Mammary epithelial cell (primary cell): ENCODE measurements at regions of chr7 and their contacts with region 1.

Region 1: DNA sequence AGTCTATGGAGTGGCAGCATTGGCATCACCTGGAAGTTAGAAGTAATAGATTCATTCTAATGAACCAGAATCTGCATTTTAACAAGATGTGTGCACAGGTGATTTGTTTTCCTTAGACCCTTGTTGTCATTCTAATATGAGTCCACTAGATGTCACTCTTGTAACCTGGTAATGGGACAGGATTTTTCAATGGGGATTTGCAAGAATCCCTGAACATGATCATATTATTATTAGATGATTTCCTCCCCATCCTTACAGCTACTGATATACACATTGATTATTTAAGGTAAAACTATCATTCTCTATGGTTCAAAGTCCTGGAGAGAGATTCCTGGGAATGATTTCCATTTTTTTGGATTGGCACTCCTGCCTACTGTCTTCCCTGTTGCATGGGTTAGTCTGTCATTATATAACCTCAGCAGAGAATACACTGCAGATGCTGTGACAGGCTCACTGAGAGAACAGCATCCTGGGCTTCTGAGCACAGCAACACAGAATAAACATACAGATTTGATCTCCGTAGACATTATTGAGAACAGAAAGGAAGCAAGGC is 194.9 kb downstream of the SUGCT start:
- DNase-seq: peak; percentile 49
- H3K4me3 ChIP-seq: no peak overlapping the region
- H3K27ac ChIP-seq: no peak overlapping the region
- H3K4me1 ChIP-seq: no peaks in the 10 kb centered on the region
- H3K27me3 ChIP-seq: no peaks in the 10 kb centered on the region
- CTCF ChIP-seq: peak; percentile 57 to 68

Region 2: GRCh38 chr7:40283391-40283790 is 46.3 kb before region 1 on chr7:
- CTCF ChIA-PET with region 1: no interaction called
- dilution Hi-C with region 1: no loop called
- in situ Hi-C with region 1: no loop called
- intact Hi-C with region 1: no loop called
- DNase-seq: no peak
- H3K4me3 ChIP-seq: no peak overlapping the region
- H3K27ac ChIP-seq: no peak overlapping the region
- H3K4me1 ChIP-seq: no peaks in the 10 kb centered on the region
- H3K27me3 ChIP-seq: no peaks in the 10 kb centered on the region
- CTCF ChIP-seq: no peak

Region 3: DNA sequence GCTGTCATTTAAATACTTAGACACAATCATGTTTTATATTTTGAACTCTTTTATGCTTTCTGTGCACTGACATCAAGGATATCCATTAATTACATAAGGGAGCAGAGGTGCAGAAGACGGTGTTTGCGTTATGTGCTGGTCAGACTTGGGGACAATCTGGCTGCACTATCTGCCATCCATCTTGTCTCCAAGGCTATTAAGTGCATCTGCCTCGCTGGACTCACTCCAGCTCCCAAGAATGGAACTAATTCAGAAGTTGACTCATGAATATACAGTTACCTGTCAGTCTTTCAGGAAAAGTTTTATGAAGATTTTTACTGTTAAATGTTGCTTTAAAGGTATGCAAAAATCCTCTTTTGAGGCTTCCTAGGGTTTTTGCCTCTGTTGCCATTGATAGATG is 196.1 kb after region 1 on chr7:
- CTCF ChIA-PET with region 1: no interaction called
- dilution Hi-C with region 1: no loop called
- in situ Hi-C with region 1: no loop called
- intact Hi-C with region 1: loop called (anchors 5 kb)
- DNase-seq: no peak
- H3K4me3 ChIP-seq: no peak overlapping the region
- H3K27ac ChIP-seq: no peak overlapping the region
- H3K4me1 ChIP-seq: no peaks in the 10 kb centered on the region
- H3K27me3 ChIP-seq: no peaks in the 10 kb centered on the region
- CTCF ChIP-seq: no peak

Region 4: GRCh38 chr7:41003031-41003925 is 673.6 kb after region 1 on chr7:
- CTCF ChIA-PET with region 1: no interaction called
- dilution Hi-C with region 1: no loop called
- in situ Hi-C with region 1: no loop called
- intact Hi-C with region 1: loop called (anchors 10 kb)
- DNase-seq: peak; percentile 49
- H3K4me3 ChIP-seq: no peak overlapping the region
- H3K27ac ChIP-seq: peak overlapping the region; percentile 91
- H3K4me1 ChIP-seq: peaks cover 50% of the 10 kb centered on the region
- H3K27me3 ChIP-seq: no peaks in the 10 kb centered on the region
- CTCF ChIP-seq: peak; percentile 71 to 83

Region 5: GRCh38 chr7:41711283-41712064 is 1381.8 kb after region 1 on chr7:
- CTCF ChIA-PET with region 1: no interaction called
- dilution Hi-C with region 1: loop called (anchors 5 kb)
- in situ Hi-C with region 1: loop called (anchors 5 to 10 kb)
- intact Hi-C with region 1: no loop called
- DNase-seq: no peak
- H3K4me3 ChIP-seq: no peak overlapping the region
- H3K27ac ChIP-seq: no peak overlapping the region
- H3K4me1 ChIP-seq: no peaks in the 10 kb centered on the region
- H3K27me3 ChIP-seq: no peaks in the 10 kb centered on the region
- CTCF ChIP-seq: peak; percentile 71 to 72